Heart right ventricle (tissue), 16 donors: ENCODE measurements at regions of chr10 and their contacts with region 1.

Region 1: GRCh38 chr10:37937864-37938263 is 38.6 kb downstream of the ZNF25 start:
- DNase-seq: no peak
- ATAC-seq: no peak
- H3K4me3 ChIP-seq: no peak overlapping the region
- H3K27ac ChIP-seq: no peak overlapping the region
- H3K4me1 ChIP-seq: no peaks in the 10 kb centered on the region
- H3K27me3 ChIP-seq: no peaks in the 10 kb centered on the region
- CTCF ChIP-seq: no peak

Region 2: GRCh38 chr10:37885850-37886249 is 52.0 kb before region 1 on chr10:
- intact Hi-C with region 1: loop called in 1 of 10 experiments (anchors 10 kb)
- DNase-seq: no peak
- ATAC-seq: no peak
- H3K4me3 ChIP-seq: no peak overlapping the region
- H3K27ac ChIP-seq: no peak overlapping the region
- H3K4me1 ChIP-seq: no peaks in the 10 kb centered on the region
- H3K27me3 ChIP-seq: no peaks in the 10 kb centered on the region
- CTCF ChIP-seq: no peak

Region 3: GRCh38 chr10:38010119-38010903 is 72.4 kb after region 1 on chr10 and contains the start of gene ZNF33A:
- intact Hi-C with region 1: no loop called
- DNase-seq: peak; percentile 89 to 92
- ATAC-seq: peak; percentile 92 to 99 (median 96)
- H3K4me3 ChIP-seq: peak within 1 kb of the TSS; percentile 29 to 80 (median 70)
- H3K27ac ChIP-seq: peak within 1 kb of the TSS; percentile 94 to 99 (median 98)
- H3K4me1 ChIP-seq: peaks cover 0 to 17% (median 9%) of the 10 kb centered on the region in 9 donors
- H3K27me3 ChIP-seq: no peaks in the 10 kb centered on the region
- CTCF ChIP-seq: peak in 1 of 9 donors; percentile 36
- total RNA-seq, gene ZNF33A: 16.8 to 27.7 (median 23.2) TPM